ENCODE measurements at regions of chr2 and their contacts with region 1.

Region 1: GRCh38 chr2:135709992-135710391 is 31.7 kb upstream of the UBXN4 start:
- DNase-seq: peak; percentile 57
- H3K4me3 ChIP-seq: no peak overlapping the region
- H3K27ac ChIP-seq: no peak overlapping the region
- H3K4me1 ChIP-seq: no peaks in the 10 kb centered on the region
- H3K27me3 ChIP-seq: no peaks in the 10 kb centered on the region
- CTCF ChIP-seq: peak; percentile 98

Region 2: GRCh38 chr2:135004005-135004746 is 705.8 kb before region 1 on chr2:
- intact Hi-C with region 1: loop called (anchors 10 kb)
- DNase-seq: peak; percentile 59
- H3K4me3 ChIP-seq: no peak overlapping the region
- H3K27ac ChIP-seq: no peak overlapping the region
- H3K4me1 ChIP-seq: peaks cover 7% of the 10 kb centered on the region
- H3K27me3 ChIP-seq: peaks cover 45% of the 10 kb centered on the region
- CTCF ChIP-seq: peak; percentile 93

Region 3: DNA sequence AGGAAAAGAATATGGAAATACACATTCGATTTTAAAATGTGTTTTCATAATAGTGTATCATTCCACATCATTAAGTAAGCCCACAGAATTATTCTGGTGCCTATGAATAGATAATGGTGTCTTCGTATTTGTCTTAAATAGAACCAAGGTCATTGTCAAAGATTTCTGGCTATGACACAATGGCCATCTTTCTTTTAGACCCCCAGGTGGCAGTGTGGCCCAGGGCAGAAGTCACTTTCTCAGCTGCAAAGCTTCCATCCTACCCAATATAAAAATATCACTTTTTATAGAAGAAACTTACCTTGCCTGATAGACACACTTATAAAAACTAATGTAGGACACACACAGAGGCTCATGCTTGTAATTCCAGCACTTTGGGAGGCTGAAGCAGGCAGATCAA is 236.4 kb before region 1 on chr2:
- intact Hi-C with region 1: loop called (anchors 10 kb)
- DNase-seq: no peak
- H3K4me3 ChIP-seq: no peak overlapping the region
- H3K27ac ChIP-seq: no peak overlapping the region
- H3K4me1 ChIP-seq: no peaks in the 10 kb centered on the region
- H3K27me3 ChIP-seq: no peaks in the 10 kb centered on the region
- CTCF ChIP-seq: peak; percentile 65